ENCODE measurements at regions of chr4 and their contacts with region 1.

Region 1: DNA sequence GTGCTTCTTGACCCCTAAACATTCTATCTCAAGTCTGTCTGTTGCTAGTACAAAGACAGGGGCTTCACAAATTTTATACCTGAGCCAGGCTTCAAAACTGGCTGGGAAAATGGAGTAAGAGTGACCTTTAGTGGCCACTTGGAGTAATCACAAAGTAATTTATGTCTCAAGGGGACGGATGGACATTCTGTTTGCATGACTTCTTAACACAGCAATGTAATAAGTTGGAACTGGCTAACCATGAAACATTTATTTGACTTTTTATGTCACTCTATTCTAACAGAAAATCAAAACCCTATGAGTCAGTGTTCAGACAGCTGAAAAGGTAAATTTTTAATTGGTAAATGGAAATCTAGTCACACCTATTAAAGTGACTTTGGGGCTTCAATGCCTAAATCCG is 600.6 kb downstream of the ANKRD50 start:
- DNase-seq: peak in 1 of 2 experiments; percentile 46
- H3K4me3 ChIP-seq: no peak overlapping the region
- H3K4me3 Mint-ChIP-seq: no peak overlapping the region
- H3K27ac Mint-ChIP-seq: no peak overlapping the region
- H3K4me1 ChIP-seq: no peaks in the 10 kb centered on the region
- H3K4me1 Mint-ChIP-seq: no peaks in the 10 kb centered on the region
- H3K27me3 ChIP-seq: no peaks in the 10 kb centered on the region
- H3K27me3 Mint-ChIP-seq: peaks cover 3% of the 10 kb centered on the region
- CTCF ChIP-seq: peak; percentile 45 to 50

Region 2: DNA sequence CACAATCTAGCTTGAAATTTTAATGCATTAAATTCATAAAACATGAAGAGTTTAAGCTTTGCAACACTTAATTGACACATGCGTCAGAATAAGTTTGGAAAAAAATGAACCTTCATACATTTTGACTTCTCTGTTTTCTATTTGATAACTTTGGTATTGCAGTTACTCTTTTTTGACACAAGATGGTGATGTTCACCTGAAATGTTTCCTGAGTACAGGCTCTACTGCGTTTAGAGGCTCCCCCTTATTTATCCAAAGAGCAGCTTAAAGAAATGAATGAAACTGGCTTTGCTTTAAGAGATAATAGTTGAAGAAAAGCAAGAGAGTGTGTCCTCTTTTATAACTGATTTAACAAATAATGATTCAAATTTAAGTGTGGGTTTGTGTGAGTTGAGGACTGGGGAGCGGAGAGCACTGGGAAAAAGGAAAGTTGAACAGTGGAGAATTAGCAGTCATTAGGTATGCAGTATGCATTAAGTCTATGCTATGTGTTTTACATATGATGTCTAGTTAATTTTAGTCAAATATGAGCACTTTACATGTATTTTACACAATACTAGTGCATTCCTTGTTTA is 1008.9 kb before region 1 on chr4:
- CTCF ChIA-PET with region 1: no interaction called
- POLR2A ChIA-PET with region 1: no interaction called
- intact Hi-C with region 1: loop called (anchors 1 kb)
- DNase-seq: peak in 1 of 2 experiments; percentile 34
- H3K4me3 ChIP-seq: no peak overlapping the region
- H3K4me3 Mint-ChIP-seq: no peak overlapping the region
- H3K27ac Mint-ChIP-seq: peak overlapping the region; percentile 3
- H3K4me1 ChIP-seq: peaks cover 3% of the 10 kb centered on the region; the same call in 1 of the 2 replicates
- H3K4me1 Mint-ChIP-seq: peaks cover 9% of the 10 kb centered on the region
- H3K27me3 ChIP-seq: no peaks in the 10 kb centered on the region
- H3K27me3 Mint-ChIP-seq: no peaks in the 10 kb centered on the region
- CTCF ChIP-seq: peak; percentile 46 to 57

Region 3: DNA sequence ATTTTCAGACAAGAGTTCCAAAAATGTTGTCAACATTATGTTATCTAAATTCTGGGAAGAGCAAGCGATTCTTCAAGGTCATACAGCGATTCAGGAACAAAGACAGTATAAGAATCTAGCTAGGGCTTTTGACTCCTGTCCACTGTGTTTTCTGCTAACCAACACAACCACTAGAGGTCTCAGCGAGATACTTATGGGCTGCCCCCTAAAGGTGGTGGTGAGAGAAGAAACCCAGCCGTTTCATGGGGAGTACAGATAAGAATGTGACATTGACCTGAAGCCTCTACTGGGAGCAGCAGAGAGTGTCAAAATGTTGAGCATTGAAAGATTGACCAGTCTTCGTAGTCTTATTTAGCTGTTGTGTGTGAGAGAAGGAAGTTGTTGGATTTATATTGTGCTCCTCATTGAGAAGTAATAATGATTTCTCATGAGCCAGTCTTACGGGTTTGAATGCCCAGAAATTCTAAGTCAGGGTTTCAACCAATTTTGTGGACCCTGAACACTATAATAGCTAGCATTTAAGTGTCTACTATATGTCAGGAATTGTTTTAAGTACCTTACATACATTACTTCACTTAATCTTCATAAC is 547.1 kb before region 1 on chr4:
- CTCF ChIA-PET with region 1: no interaction called
- POLR2A ChIA-PET with region 1: no interaction called
- intact Hi-C with region 1: loop called (anchors 1 kb)
- DNase-seq: peak; percentile 80 to 81
- H3K4me3 ChIP-seq: no peak overlapping the region
- H3K4me3 Mint-ChIP-seq: no peak overlapping the region
- H3K27ac Mint-ChIP-seq: no peak overlapping the region
- H3K4me1 ChIP-seq: peaks cover 20% of the 10 kb centered on the region
- H3K4me1 Mint-ChIP-seq: peaks cover 22% of the 10 kb centered on the region
- H3K27me3 ChIP-seq: no peaks in the 10 kb centered on the region
- H3K27me3 Mint-ChIP-seq: no peaks in the 10 kb centered on the region
- CTCF ChIP-seq: peak; percentile 88 to 99

Region 4: DNA sequence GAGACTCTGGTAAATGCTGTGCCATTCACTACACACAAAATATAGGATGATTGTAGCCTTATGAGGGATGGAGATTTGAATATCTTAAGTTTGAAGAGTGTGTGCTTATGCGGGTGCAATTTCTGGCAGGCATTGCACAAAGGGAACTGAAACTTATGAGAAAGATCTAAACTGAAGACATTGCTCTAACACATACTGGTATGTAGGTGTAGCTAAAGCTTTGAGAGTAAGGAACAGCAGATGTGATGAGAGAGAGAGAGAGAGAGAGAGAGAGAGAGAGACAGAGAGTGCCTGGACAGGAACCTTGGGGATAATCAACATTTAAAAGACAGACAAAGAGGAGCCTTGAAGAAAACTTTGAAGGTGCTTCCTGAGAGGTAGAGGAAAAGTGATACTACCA is 335.7 kb before region 1 on chr4:
- CTCF ChIA-PET with region 1: interaction called, 3 read pairs
- POLR2A ChIA-PET with region 1: no interaction called
- intact Hi-C with region 1: loop called (anchors 1 kb)
- DNase-seq: no peak
- H3K4me3 ChIP-seq: no peak overlapping the region
- H3K4me3 Mint-ChIP-seq: no peak overlapping the region
- H3K27ac Mint-ChIP-seq: no peak overlapping the region
- H3K4me1 ChIP-seq: no peaks in the 10 kb centered on the region
- H3K4me1 Mint-ChIP-seq: no peaks in the 10 kb centered on the region
- H3K27me3 ChIP-seq: no peaks in the 10 kb centered on the region; the same call in 1 of the 2 replicates
- H3K27me3 Mint-ChIP-seq: peaks cover 2% of the 10 kb centered on the region
- CTCF ChIP-seq: no peak

Region 5: DNA sequence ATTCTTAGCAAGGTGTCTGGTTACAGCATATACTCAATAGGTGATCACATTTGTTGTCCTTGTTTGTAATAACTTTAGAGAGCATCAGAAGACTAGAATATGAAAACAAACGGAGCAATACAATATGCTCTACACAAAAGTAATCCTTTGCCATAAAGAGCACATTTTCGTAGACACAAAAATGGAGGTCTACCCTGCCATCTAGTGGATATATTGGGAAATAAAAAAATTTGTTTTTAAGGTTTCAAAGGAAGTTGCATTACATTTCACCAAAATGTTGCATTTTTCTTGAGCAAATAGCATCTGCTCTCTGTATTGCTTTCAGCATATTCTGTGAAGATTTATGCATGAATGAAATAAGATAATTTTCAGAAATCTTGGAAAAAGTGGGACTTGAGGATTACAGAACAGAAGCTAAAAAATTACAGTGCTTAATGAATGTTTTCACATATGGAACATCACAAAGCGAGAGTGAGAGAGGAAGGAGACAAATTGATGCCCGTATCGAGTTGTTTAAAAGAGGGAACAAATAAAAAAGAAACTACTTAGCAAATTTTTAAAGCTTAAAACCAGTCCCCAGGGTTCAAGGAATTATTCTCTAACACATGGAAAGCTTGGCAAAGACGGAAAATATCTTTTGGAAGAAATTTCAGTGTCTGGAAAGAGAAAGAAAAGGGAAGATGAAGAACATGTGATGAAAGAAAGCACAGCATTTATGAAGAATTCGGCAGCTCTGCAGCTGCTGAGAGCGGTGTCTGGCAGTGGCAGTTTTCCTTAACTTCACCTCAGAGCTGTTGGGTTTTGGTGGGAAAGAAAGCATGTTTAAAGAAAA is 210.5 kb after region 1 on chr4:
- CTCF ChIA-PET with region 1: no interaction called
- POLR2A ChIA-PET with region 1: no interaction called
- intact Hi-C with region 1: loop called (anchors 10 kb)
- DNase-seq: peak in 1 of 2 experiments; percentile 3
- H3K4me3 ChIP-seq: no peak overlapping the region
- H3K4me3 Mint-ChIP-seq: no peak overlapping the region
- H3K27ac Mint-ChIP-seq: no peak overlapping the region
- H3K4me1 ChIP-seq: no peaks in the 10 kb centered on the region
- H3K4me1 Mint-ChIP-seq: no peaks in the 10 kb centered on the region
- H3K27me3 ChIP-seq: no peaks in the 10 kb centered on the region
- H3K27me3 Mint-ChIP-seq: peaks cover 4% of the 10 kb centered on the region
- CTCF ChIP-seq: peak; percentile 42 to 62

Region 6: DNA sequence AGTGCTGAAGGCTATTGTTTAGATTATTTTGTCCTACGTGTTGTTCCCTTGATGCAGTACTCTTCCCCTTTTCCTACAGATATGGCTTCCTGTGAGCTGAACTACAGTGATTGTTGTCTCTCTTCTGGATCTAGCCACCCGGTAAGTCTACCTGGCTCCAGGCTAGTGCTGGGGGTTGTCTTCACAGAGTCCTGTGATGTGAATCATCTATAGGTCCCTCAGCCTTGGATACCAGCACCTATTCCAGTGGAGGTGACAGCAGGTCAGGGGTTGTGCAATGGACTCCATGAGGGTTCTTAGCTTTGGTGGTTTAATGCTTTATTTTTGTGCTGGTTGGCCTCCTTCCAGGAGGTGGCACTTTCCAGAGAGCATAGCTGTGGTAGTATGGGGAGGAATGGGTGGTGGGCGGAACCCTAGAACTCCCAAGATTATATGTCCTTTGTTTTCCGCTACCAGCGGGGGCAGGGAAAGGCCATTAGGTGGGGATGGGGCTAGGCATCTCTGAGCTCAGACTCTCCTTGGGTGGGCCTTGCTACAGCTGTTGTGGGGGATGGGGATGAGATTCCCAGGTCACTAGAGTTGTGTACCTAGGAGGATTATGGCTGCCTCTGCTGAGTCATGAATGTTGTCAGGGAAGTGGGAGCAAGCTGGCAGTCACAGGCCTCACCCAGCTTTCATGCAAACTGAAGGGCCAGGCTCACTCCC is 722.0 kb after region 1 on chr4:
- CTCF ChIA-PET with region 1: no interaction called
- POLR2A ChIA-PET with region 1: no interaction called
- intact Hi-C with region 1: no loop called
- DNase-seq: no peak
- H3K4me3 ChIP-seq: no peak overlapping the region
- H3K4me3 Mint-ChIP-seq: no peak overlapping the region
- H3K27ac Mint-ChIP-seq: no peak overlapping the region
- H3K4me1 ChIP-seq: no peaks in the 10 kb centered on the region
- H3K4me1 Mint-ChIP-seq: no peaks in the 10 kb centered on the region
- H3K27me3 ChIP-seq: no peaks in the 10 kb centered on the region
- H3K27me3 Mint-ChIP-seq: no peaks in the 10 kb centered on the region
- CTCF ChIP-seq: no peak